A673 (cell line): ENCODE measurements at regions of chr7 and their contacts with region 1.

Region 1: DNA sequence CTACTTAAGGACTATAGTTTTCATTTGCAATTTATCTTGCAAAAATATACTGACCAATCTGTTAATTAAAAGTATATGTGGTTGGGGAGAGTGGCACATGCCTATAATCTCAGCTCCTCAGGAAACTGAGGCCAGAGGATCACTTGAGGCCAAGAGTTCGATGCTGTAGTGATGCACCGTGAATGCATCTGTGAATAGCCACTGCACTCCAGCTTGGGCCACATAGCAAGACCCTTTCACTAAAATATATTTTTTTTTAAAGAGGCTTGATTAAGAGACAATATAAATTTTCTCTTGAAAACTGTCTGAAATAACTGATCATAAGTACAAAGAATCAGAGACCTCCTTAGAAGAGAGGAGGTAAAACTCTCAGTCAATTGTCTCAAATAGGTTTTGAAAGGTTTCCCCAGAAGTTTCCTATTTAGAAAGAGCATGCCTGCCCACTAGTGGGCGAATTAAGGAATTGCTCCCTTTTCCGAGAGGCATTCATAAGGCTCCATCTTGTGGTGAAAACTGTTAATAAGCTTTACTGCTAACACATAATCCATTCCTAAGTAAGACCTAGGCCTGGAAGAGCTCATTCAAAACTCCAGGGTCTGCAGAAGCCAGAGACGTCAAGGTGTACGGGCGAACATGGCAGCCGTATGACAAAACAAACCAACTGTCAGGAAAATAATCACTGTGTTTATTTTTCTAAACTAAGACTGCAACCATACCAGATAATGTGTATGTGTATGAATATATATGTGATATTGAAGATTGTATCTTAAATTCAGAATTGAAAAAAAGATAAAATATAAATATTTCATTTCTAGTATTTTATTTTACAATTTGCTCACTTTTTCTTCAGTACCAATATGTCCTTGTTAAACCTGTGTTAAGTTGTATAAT is 6.8 kb upstream of the TAS2R40 start:
- DNase-seq: peak; percentile 90
- H3K4me3 ChIP-seq: no peak overlapping the region
- H3K27ac ChIP-seq: no peak overlapping the region
- H3K4me1 ChIP-seq: no peaks in the 10 kb centered on the region
- H3K27me3 ChIP-seq: no peaks in the 10 kb centered on the region
- CTCF ChIP-seq: peak; percentile 100

Region 2: DNA sequence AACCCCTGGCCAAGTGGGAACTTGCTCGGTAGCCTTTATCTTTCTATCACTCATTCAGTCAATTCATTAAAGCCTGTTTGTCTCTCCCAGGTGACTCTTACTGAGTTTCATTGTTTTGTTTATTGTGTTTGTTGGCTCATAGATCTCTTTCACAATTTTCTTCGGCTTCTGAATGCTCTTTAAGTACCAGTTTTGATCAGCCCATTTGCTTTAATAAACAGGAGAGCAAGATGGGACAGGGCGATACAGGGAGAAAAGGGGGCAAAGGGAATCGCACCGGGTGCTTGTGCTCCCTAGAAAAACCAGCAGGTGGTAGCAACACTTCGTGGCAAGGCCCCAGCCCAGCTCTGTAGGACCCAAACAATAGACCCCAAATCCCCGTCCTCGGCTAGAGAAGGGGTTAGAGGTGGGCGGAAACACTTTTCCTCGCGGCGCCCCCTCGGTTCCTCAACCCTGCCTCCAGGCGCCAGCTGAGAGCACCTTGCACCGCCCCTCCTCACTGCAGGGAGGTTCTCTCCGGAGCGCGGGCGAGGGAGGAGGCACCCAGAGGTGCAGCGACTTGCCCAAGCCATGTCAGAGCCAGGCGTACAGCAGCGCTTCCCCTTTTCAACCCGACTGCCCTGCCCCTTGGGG is 361.2 kb before region 1 on chr7:
- CTCF ChIA-PET with region 1: no interaction called
- POLR2A ChIA-PET with region 1: no interaction called
- intact Hi-C with region 1: loop called (anchors 2 kb)
- DNase-seq: peak; percentile 67
- H3K4me3 ChIP-seq: peak overlapping the region; percentile 50
- H3K27ac ChIP-seq: no peak overlapping the region
- H3K4me1 ChIP-seq: peaks cover 9% of the 10 kb centered on the region
- H3K27me3 ChIP-seq: peaks cover 61% of the 10 kb centered on the region
- CTCF ChIP-seq: peak; percentile 66

Region 3: DNA sequence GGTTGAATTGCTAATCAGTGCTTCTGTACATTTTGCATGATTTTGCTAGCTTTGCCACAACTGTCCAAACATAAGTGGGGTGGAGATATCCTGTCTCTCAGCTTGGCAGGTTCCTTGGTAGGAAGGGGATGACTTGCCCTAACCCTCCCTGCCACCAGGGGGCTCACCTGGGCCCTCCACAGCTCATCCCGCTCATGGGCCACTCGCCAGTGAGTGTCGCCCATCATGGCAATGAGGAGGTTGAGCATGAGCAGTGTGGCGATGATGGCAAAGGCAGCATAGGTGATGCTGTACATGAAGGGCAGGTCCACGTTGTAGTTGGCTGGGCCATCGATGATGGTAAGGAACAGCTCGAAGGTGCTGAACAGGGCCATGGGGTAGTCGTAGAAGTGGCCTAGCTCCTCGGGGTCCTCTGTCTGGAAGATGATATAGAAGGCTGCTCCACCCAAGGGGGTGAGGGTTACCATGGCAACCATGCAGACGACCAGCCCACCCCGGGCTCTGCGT is 341.7 kb before region 1 on chr7:
- CTCF ChIA-PET with region 1: interaction called, 16 read pairs
- POLR2A ChIA-PET with region 1: no interaction called
- intact Hi-C with region 1: no loop called
- DNase-seq: peak; percentile 48
- H3K4me3 ChIP-seq: no peak overlapping the region
- H3K27ac ChIP-seq: no peak overlapping the region
- H3K4me1 ChIP-seq: no peaks in the 10 kb centered on the region
- H3K27me3 ChIP-seq: no peaks in the 10 kb centered on the region
- CTCF ChIP-seq: peak; percentile 69

Region 4: DNA sequence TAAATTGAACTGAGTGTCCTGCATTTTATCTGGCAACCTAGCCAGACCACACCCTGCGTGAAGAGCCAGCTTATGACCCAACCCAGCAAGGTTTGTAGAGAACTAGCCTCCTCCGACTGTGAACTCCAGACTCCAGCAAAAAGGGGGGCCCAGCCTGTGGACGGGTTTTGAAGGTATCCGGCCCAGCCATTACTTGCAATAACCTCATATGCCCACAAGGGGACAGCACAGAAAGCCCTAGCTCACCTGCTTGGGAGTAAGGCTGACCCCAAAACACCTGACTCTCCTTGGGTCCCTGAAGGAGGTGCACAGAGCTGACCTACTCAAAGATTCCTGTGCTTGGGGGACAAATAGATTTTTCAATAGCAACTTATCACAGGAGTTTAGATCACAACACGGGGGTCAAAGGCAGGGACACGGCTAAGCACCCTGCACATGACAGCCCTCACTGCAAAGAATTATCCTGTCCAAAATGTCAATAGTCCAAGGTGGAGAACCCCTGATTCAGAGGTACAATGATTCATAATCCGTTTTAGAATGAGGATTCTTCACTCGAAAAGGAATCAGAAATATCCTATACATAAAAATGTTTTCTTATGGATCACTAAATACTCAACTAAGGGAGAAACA is 334.0 kb before region 1 on chr7:
- CTCF ChIA-PET with region 1: interaction called, 5 read pairs
- POLR2A ChIA-PET with region 1: no interaction called
- intact Hi-C with region 1: loop called (anchors 2 kb)
- DNase-seq: peak; percentile 22
- H3K4me3 ChIP-seq: no peak overlapping the region
- H3K27ac ChIP-seq: no peak overlapping the region
- H3K4me1 ChIP-seq: no peaks in the 10 kb centered on the region
- H3K27me3 ChIP-seq: peaks cover 28% of the 10 kb centered on the region
- CTCF ChIP-seq: peak; percentile 74

Region 5: DNA sequence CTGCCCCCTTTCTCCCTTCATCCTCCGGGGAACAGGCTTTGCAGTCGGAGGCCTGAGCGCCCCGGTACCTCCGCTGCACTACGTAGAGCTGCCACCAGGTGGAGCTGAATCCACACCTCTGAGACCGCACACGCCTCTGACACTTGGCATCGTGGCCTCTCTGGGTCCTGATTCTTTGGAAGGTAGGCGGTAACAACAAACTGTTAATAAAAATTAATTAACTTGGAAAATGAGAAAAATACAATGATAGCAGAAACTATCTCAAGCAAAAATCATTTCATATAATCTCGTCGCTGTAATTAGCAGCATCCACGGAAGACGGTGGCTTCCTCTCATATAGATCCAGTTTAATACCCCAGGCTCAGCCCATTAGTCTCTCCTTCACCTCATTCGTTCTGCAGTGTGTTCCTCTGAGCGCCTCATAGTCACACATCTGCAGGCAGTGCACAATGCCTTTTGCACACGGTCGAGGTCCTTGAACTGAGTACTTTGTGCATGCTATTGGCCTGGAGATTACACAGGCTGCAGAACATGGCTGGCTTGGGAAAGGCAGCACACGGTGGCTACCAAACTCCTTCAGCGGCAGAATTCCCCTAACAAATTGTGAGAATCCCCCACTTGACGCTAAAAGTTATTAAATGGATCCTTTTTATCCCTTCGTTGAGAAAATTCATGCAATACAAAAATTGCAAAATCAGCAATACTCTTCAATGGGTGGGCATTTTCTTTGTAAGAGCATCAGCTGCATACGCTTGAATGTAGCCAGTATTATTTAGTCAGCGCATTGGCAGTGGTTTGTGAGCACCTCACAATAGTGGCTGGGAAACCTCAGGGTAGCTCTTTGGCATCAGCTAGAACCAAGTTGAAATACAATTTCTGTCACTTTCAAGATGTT is 206.8 kb before region 1 on chr7:
- CTCF ChIA-PET with region 1: interaction called, 54 read pairs
- POLR2A ChIA-PET with region 1: no interaction called
- intact Hi-C with region 1: loop called (anchors 1 kb)
- DNase-seq: peak; percentile 77
- H3K4me3 ChIP-seq: no peak overlapping the region
- H3K27ac ChIP-seq: no peak overlapping the region
- H3K4me1 ChIP-seq: no peaks in the 10 kb centered on the region
- H3K27me3 ChIP-seq: peaks cover 6% of the 10 kb centered on the region
- CTCF ChIP-seq: peak; percentile 96